ENCODE measurements at regions of chr1 and their contacts with region 1.

Region 1: GRCh38 chr1:68232354-68233148 is at the start of gene WLS:
- H3K4me3 Mint-ChIP-seq: peak within 1 kb of the TSS; percentile 92
- H3K27ac Mint-ChIP-seq: peak within 1 kb of the TSS; percentile 80
- H3K4me1 Mint-ChIP-seq: peaks cover 39% of the 10 kb centered on the region
- H3K27me3 Mint-ChIP-seq: peaks cover 49% of the 10 kb centered on the region

Region 2: DNA sequence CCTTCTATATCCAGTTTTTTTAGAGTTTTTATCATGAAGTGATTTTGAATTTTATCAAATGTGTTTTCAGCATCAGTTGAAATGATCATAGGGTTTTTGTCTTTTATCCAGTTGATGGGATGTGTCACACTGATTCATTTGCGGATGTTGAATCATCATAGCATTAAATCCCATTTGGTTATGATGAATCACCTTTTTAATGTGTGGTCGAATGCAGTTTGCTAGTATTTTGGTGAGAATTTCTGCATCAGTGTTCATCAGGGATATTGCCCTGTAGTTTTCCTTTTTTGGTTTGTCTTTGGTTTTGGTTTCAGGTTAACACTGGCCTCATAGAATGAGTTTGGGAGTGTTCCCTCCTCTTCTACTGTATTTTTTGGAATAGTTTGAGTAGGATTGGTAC is 262.5 kb before region 1 on chr1:
- intact Hi-C with region 1: no loop called
- H3K4me3 Mint-ChIP-seq: no peak overlapping the region
- H3K27ac Mint-ChIP-seq: no peak overlapping the region
- H3K4me1 Mint-ChIP-seq: no peaks in the 10 kb centered on the region
- H3K27me3 Mint-ChIP-seq: no peaks in the 10 kb centered on the region

Region 3: GRCh38 chr1:68269637-68270426 is 37.3 kb after region 1 on chr1:
- intact Hi-C with region 1: loop called (anchors 5 kb)
- H3K4me3 Mint-ChIP-seq: no peak overlapping the region
- H3K27ac Mint-ChIP-seq: no peak overlapping the region
- H3K4me1 Mint-ChIP-seq: peaks cover 21% of the 10 kb centered on the region
- H3K27me3 Mint-ChIP-seq: no peaks in the 10 kb centered on the region